Breast epithelium (tissue), 4 donors: ENCODE measurements at regions of chr6 and their contacts with region 1.

Region 1: DNA sequence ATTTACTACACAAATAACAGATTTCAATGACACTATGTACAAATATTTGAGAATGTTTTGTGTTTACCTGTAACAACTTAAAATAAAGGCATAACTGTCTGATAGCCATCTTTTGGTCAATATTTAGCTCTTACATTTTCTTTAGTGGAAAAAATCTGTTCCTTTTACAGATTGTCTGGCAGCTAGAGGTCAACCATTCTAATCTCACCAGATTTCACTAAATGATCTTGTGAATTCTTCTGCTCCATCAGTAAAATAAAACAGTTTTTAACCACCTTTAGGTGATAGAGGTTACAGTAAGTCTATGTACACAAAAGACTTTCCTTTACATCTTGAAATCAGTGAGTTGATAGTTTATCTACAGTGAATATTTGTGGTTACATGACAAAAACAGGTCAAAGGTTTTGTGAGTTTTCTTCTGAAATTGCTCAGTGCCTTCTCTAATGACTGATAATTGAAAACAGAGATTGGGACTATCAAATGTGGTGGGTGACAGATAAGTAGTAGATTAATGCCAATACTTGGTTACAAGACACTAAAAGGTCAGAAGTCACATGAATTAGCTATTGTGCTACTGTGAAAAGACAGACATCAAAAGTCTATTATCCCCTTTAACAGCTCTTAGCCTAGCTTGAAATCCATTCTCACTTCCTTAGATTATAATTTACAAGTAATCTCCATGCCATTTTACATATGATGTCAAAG is 47.4 kb downstream of the BMP5 start:
- DNase-seq: no peak
- H3K4me3 ChIP-seq: no peak overlapping the region
- H3K27ac ChIP-seq: no peak overlapping the region
- H3K4me1 ChIP-seq: no peaks in the 10 kb centered on the region
- H3K27me3 ChIP-seq: no peaks in the 10 kb centered on the region
- CTCF ChIP-seq: no peak
- POLR2A ChIP-seq: no peak

Region 2: DNA sequence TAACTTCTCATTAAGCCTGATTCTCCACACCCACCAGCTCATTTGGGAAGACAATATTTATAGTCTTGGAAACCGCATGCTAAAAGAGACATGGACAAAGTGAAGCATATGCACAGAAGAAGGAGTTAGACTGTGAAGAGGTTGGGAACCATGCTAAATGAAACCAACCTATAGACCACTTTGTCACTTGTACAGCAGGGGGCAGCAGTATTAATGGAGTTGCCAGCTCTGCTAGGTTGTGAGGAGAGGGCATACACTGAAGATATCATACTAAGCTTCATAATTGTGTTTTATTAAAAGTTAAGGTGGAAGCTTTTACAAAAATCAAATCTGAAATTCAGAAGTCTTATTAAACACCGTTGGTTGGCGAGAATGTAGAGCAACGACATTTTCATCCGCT is 210.7 kb before region 1 on chr6:
- intact Hi-C with region 1: no loop called
- DNase-seq: no peak
- H3K4me3 ChIP-seq: no peak overlapping the region
- H3K27ac ChIP-seq: no peak overlapping the region
- H3K4me1 ChIP-seq: no peaks in the 10 kb centered on the region
- H3K27me3 ChIP-seq: no peaks in the 10 kb centered on the region
- CTCF ChIP-seq: peak in 1 of 3 donors; percentile 19
- POLR2A ChIP-seq: no peak

Region 3: DNA sequence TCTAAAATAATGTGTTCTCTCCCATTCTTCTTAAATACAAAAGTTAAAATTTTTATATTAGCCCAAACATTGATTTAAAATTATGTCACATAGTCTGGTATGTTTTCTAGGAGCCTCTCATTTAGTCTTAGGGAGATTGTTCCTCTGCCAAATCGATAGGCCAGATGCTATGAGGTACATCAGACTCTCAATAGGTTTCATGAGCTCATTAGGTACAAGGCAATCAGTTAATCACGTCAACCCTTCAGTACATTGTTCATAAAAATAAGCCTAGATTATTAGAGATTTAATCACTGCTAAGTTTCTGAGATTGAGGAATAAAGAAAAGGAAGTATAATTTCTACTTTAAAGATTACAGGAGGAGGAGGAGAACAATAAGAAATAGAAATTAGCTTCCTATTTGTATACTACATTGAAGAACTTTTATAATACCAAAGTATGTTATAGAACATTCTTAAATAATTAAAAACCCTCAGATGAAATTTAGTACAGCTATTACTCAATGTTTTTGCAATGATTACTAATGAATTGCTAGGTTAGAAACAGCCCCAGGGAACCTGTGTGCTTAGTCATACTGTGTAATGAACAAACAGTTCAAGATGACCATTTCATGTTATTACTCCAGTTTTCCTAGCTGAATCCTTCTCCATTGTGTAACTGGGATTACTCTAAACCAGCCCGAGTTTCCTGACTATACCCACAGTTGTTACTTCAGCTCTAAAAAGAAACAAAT is 69.6 kb before region 1 on chr6:
- intact Hi-C with region 1: no loop called
- DNase-seq: peak in 1 of 2 donors; percentile 49
- H3K4me3 ChIP-seq: no peak overlapping the region
- H3K27ac ChIP-seq: peak overlapping the region; percentile 80 to 83
- H3K4me1 ChIP-seq: no peaks in the 10 kb centered on the region
- H3K27me3 ChIP-seq: no peaks in the 10 kb centered on the region
- CTCF ChIP-seq: no peak
- POLR2A ChIP-seq: no peak

Region 4: DNA sequence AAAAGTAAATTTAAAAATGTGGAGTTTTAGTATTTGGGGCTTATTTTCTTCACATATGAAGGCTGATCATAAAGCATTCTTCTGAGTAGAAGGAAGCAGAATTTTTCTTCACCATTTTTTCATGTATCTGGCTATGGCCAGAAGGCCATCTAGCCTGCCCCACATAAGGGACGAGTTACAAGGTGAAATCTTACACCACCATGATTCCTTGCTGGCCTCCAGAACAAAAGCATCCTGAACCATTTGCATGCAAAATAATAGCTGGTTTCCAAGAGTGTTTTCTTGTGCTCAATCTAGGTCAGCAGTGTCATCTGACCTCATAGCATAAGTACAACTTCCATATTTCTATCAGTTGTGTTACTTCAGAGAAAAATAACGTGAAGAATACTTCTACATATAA is 45.7 kb before region 1 on chr6:
- intact Hi-C with region 1: loop called (anchors 2 kb)
- DNase-seq: no peak
- H3K4me3 ChIP-seq: no peak overlapping the region
- H3K27ac ChIP-seq: no peak overlapping the region
- H3K4me1 ChIP-seq: no peaks in the 10 kb centered on the region
- H3K27me3 ChIP-seq: no peaks in the 10 kb centered on the region
- CTCF ChIP-seq: no peak
- POLR2A ChIP-seq: no peak

Region 5: GRCh38 chr6:55868771-55869479 is 41.0 kb after region 1 on chr6:
- intact Hi-C with region 1: no loop called
- DNase-seq: peak in 1 of 2 donors; percentile 23
- H3K4me3 ChIP-seq: no peak overlapping the region
- H3K27ac ChIP-seq: peak overlapping the region; percentile 41 to 54
- H3K4me1 ChIP-seq: no peaks in the 10 kb centered on the region
- H3K27me3 ChIP-seq: no peaks in the 10 kb centered on the region
- CTCF ChIP-seq: no peak
- POLR2A ChIP-seq: no peak

Region 6: DNA sequence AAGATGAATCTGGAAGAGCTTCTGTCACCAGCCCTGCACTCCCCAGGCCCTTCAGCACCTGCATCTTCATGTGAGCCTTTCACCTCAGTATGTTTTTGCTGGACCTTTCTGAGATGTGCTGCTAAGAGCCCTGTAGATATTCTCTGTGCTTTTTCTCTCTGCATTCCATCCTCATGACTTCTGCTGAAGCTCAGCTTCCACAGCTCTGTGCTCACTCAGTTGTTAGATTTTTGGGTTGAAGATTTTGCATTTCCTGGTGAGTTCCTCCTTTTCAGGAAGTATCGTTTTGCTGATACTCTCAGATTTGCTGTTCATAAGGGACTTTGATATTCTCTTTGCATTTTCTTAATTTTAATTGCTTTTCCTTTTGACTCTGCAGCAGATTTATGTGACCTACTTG is 1236.8 kb after region 1 on chr6:
- intact Hi-C with region 1: no loop called
- DNase-seq: no peak
- H3K4me3 ChIP-seq: no peak overlapping the region
- H3K27ac ChIP-seq: no peak overlapping the region
- H3K4me1 ChIP-seq: no peaks in the 10 kb centered on the region
- H3K27me3 ChIP-seq: no peaks in the 10 kb centered on the region
- CTCF ChIP-seq: no peak
- POLR2A ChIP-seq: no peak